ENCODE measurements at regions of chr11 and their contacts with region 1.

Region 1: DNA sequence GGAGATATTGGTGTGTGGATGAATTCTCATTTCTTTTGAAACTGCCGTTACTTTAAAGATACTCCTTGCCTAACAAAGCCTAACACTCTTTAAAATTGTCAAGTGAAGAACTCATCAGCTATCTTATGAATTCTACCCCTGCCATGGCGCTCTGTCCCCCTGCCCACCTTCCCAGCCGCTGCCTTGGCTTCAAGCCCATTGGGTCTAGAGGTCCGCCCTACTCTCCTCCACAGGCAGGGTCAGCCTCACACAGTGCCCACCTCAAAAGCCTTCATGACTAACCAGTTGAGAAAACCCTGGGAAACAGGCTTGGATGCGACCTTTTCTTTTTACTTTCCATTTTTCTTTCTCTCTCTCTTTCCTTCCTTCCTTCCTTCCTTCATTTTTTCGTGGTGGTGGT is 128.6 kb downstream of the RRAS2 start:
- DNase-seq: no peak
- ATAC-seq: no peak
- H3K4me3 ChIP-seq: no peak overlapping the region
- H3K27ac ChIP-seq: no peak overlapping the region
- H3K4me1 ChIP-seq: no peaks in the 10 kb centered on the region
- H3K27me3 ChIP-seq: peaks cover 18% of the 10 kb centered on the region; the same call in 1 of the 2 replicates
- CTCF ChIP-seq: no peak
- POLR2A ChIP-seq: no peak
- RAD21 ChIP-seq: no peak

Region 2: GRCh38 chr11:13676576-13676975 is 553.8 kb before region 1 on chr11:
- CTCF ChIA-PET with region 1: no interaction called
- POLR2A ChIA-PET with region 1: no interaction called
- RAD21 ChIA-PET with region 1: interaction called in 1 of 2 experiments, 12 read pairs
- intact Hi-C with region 1: no loop called
- DNase-seq: no peak
- ATAC-seq: no peak
- H3K4me3 ChIP-seq: no peak overlapping the region
- H3K27ac ChIP-seq: no peak overlapping the region
- H3K4me1 ChIP-seq: no peaks in the 10 kb centered on the region
- H3K27me3 ChIP-seq: no peaks in the 10 kb centered on the region
- CTCF ChIP-seq: no peak
- POLR2A ChIP-seq: no peak
- RAD21 ChIP-seq: no peak

Region 3: DNA sequence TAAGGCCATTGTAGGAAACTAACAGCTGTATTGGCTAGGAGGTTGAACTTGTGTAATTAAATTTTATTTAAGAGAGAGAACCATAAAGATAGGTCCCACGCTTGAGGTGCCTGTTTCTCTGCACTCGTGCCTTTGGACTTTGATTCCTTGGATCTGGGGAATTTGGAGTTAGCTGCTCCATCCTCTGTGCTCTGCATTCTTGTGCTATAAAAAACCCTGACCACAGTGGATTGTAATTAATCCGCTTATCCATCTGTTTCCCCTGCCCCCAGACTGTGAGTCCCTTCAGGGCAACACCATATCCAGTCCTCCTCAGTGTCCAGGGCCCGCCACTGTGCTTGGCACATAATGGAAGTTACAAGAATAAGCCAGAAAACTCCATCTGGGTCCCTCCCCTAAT is 98.1 kb before region 1 on chr11:
- CTCF ChIA-PET with region 1: no interaction called
- POLR2A ChIA-PET with region 1: no interaction called
- RAD21 ChIA-PET with region 1: no interaction called
- intact Hi-C with region 1: no loop called
- DNase-seq: no peak
- ATAC-seq: no peak
- H3K4me3 ChIP-seq: no peak overlapping the region
- H3K27ac ChIP-seq: no peak overlapping the region
- H3K4me1 ChIP-seq: no peaks in the 10 kb centered on the region
- H3K27me3 ChIP-seq: no peaks in the 10 kb centered on the region; the same call in 1 of the 2 replicates
- CTCF ChIP-seq: no peak
- POLR2A ChIP-seq: no peak
- RAD21 ChIP-seq: no peak